CD8-positive, alpha-beta memory T cell (primary cell): ENCODE measurements at regions of chr10 and their contacts with region 1.

Region 1: GRCh38 chr10:128069351-128070051 is 56.7 kb downstream of the MKI67 start:
- DNase-seq: peak; percentile 67 to 84 (median 68)
- H3K4me3 ChIP-seq: no peak overlapping the region
- H3K4me3 Mint-ChIP-seq: peak overlapping the region in 2 of 7 donors; percentile 11 to 44
- H3K27ac ChIP-seq: no peak overlapping the region
- H3K27ac Mint-ChIP-seq: peak overlapping the region in 7 of 8 donors; percentile 9 to 88 (median 76)
- H3K4me1 ChIP-seq: peaks cover 25% of the 10 kb centered on the region
- H3K4me1 Mint-ChIP-seq: peaks cover 44 to 51% (median 45%) of the 10 kb centered on the region in 3 donors
- H3K27me3 ChIP-seq: no peaks in the 10 kb centered on the region
- H3K27me3 Mint-ChIP-seq: no peaks in the 10 kb centered on the region

Region 2: DNA sequence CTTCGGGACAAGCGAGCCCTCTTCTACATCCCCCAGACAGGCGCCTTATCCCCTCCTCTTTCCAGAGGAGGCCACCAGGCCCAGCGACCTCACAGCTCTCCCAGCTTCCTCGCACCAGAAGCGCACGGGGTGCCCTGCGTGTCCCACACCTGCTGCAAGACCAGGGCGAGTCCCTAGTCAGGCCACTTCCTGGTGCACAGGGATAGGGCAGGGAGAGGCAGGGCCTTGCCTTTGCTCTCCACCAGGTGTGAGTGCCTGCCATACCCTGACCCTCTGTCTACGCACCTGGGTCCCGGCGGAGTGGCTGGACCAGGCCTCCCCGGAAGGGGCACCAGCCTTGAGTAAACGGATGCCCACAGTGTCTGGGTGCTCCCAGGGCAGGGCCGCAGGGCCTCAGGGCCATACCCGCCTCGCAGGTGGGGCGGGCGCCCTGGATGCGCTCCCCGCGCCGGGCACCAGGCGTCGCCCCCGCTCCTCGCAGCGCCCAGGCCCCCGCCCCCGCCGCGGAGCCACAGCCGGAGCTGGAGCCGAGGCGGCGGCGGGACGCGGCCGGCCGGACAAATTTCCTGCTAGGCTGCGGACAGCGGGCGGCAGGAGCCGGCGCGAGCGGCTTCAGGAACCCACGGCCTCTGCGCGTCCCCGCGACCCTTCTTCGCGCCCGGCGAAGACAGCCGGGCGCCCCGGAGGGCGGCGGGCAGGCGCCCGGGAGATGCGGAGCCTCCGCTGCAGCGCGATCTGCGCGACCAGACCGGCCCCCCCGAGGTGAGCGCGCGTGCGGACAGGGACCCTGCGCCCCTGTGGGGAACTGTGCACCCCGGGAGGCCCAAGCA is 162.7 kb before region 1 on chr10 and contains the start of gene PTPRE:
- CTCF ChIA-PET with region 1: interaction called, 11 read pairs
- POLR2A ChIA-PET with region 1: no interaction called
- DNase-seq: peak; percentile 21 to 53 (median 43)
- H3K4me3 ChIP-seq: no peak within 1 kb of the TSS
- H3K4me3 Mint-ChIP-seq: peak within 1 kb of the TSS in 6 of 7 donors; percentile 28 to 59 (median 48)
- H3K27ac ChIP-seq: no peak within 1 kb of the TSS
- H3K27ac Mint-ChIP-seq: no peak within 1 kb of the TSS
- H3K4me1 ChIP-seq: no peaks in the 10 kb centered on the region
- H3K4me1 Mint-ChIP-seq: no peaks in the 10 kb centered on the region
- H3K27me3 ChIP-seq: peaks cover 11% of the 10 kb centered on the region
- H3K27me3 Mint-ChIP-seq: peaks cover 31 to 51% of the 10 kb centered on the region in 2 donors
- total RNA-seq, gene PTPRE: 25.2 to 29.5 TPM

Region 3: DNA sequence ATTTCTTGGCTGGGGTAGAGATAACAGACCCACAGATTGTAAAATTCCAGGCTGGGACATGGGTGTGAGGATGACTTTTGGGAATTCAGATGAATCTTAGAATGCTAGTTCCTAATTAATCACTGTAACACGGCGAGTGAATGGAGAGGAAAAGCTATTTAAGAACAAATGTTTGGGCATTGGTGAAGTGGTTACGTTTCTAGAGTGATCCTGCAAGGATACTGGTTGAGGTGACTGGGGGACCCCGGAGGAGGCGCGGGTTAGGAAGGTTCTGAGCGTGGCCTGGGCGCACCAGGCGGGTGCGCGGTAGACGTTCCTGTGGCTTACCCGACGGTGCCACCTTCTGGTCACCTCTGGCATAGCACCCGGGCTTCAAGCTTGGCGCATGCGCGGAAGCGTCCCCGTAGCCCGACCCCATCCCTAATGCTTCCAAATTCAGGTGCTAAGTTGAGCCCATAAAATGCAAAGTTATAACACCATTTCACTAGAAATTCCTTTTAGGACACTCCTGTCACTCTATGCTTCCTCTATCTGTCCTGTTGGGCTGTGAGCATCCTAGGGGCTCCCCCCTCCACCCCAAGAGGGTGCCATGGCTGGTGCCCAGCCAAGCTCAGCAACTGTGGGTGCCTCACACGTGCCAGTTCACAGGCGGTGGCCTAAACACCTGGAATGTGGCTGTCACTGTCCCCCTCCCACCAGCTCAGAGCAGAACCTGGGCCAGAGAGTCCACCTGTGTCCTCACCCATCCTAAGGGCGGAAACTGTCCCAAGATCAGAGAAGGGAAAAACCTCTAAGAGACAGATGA is 58.1 kb before region 1 on chr10:
- CTCF ChIA-PET with region 1: interaction called, 24 read pairs
- POLR2A ChIA-PET with region 1: no interaction called
- DNase-seq: peak; percentile 80 to 88 (median 81)
- H3K4me3 ChIP-seq: no peak overlapping the region
- H3K4me3 Mint-ChIP-seq: peak overlapping the region in 2 of 7 donors; percentile 3 to 6
- H3K27ac ChIP-seq: no peak overlapping the region
- H3K27ac Mint-ChIP-seq: no peak overlapping the region
- H3K4me1 ChIP-seq: peaks cover 7% of the 10 kb centered on the region
- H3K4me1 Mint-ChIP-seq: peaks cover 8 to 9% (median 8%) of the 10 kb centered on the region in 3 donors
- H3K27me3 ChIP-seq: peaks cover 3% of the 10 kb centered on the region
- H3K27me3 Mint-ChIP-seq: peaks cover 4 to 24% of the 10 kb centered on the region in 2 donors

Region 4: GRCh38 chr10:128028508-128029289 is 40.8 kb before region 1 on chr10:
- CTCF ChIA-PET with region 1: interaction called, 242 read pairs
- POLR2A ChIA-PET with region 1: no interaction called
- DNase-seq: no peak
- H3K4me3 ChIP-seq: no peak overlapping the region
- H3K4me3 Mint-ChIP-seq: no peak overlapping the region
- H3K27ac ChIP-seq: no peak overlapping the region
- H3K27ac Mint-ChIP-seq: peak overlapping the region in 1 of 8 donors; percentile 65
- H3K4me1 ChIP-seq: no peaks in the 10 kb centered on the region
- H3K4me1 Mint-ChIP-seq: peaks cover 3 to 6% (median 5%) of the 10 kb centered on the region in 3 donors
- H3K27me3 ChIP-seq: no peaks in the 10 kb centered on the region
- H3K27me3 Mint-ChIP-seq: no peaks in the 10 kb centered on the region

Region 5: DNA sequence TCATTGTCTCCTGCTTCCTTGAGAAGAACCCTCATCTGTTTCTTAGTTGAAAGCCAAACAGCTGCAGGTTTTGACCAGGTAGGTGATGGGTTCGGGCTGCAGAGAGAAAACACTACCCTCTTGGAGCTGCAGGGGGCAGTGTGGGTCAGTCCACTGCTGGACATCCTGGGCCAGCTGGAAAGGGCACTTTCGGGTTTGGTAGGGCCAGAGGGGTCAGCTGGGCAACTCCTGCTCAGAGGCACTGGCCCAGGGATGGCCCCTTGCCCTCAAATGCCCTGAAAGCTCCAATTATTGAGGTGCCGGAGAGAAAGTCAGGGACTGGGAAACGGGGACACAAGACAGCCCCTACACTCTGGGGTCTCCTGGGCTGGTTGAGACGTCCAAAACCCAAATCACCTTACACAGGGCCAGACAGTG is 33.9 kb before region 1 on chr10:
- CTCF ChIA-PET with region 1: interaction called, 242 read pairs
- POLR2A ChIA-PET with region 1: interaction called, 6 read pairs
- DNase-seq: peak; percentile 52 to 69 (median 59)
- H3K4me3 ChIP-seq: no peak overlapping the region
- H3K4me3 Mint-ChIP-seq: no peak overlapping the region
- H3K27ac ChIP-seq: no peak overlapping the region
- H3K27ac Mint-ChIP-seq: no peak overlapping the region
- H3K4me1 ChIP-seq: no peaks in the 10 kb centered on the region
- H3K4me1 Mint-ChIP-seq: peaks cover 0 to 6% (median 3%) of the 10 kb centered on the region in 3 donors
- H3K27me3 ChIP-seq: no peaks in the 10 kb centered on the region
- H3K27me3 Mint-ChIP-seq: no peaks in the 10 kb centered on the region

Region 6: DNA sequence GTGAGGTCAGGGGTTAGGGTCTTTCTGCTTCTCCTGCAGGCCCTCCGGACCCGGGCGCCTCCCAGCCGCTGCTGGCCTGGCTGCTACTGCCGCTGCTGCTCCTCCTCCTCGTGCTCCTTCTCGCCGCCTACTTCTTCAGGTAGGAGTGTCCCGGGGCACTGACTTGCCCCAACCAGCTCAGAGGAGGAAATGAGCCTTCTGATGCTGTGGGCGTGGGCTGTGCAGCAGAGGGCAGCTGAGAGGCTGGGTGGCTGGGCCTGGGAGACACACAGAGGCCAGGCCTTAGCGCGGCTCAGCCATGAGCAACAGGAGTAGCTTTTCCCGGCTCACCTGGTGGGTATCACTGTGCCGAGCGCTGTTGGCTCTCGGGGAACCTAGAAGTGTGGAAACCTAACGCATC is 22.1 kb before region 1 on chr10:
- CTCF ChIA-PET with region 1: interaction called, 242 read pairs
- POLR2A ChIA-PET with region 1: interaction called, 51 read pairs
- DNase-seq: peak; percentile 76 to 90 (median 80)
- H3K4me3 ChIP-seq: peak overlapping the region; percentile 94
- H3K4me3 Mint-ChIP-seq: peak overlapping the region; percentile 85 to 97 (median 88)
- H3K27ac ChIP-seq: peak overlapping the region; percentile 95
- H3K27ac Mint-ChIP-seq: peak overlapping the region; percentile 94 to 100 (median 97)
- H3K4me1 ChIP-seq: peaks cover 55% of the 10 kb centered on the region
- H3K4me1 Mint-ChIP-seq: peaks cover 57 to 73% (median 64%) of the 10 kb centered on the region in 3 donors
- H3K27me3 ChIP-seq: no peaks in the 10 kb centered on the region
- H3K27me3 Mint-ChIP-seq: no peaks in the 10 kb centered on the region